Activated CD4-positive, alpha-beta memory T cell treated with anti-CD3 and anti-CD28 coated beads for 36 hours (primary cell): ENCODE measurements at regions of chr11 and their contacts with region 1.

Region 1: GRCh38 chr11:35144136-35144741 is 5.3 kb downstream of the CD44 start:
- DNase-seq: peak; percentile 85
- H3K4me3 Mint-ChIP-seq: peak overlapping the region; percentile 66
- H3K27ac Mint-ChIP-seq: peak overlapping the region; percentile 99
- H3K4me1 Mint-ChIP-seq: peaks cover 69% of the 10 kb centered on the region
- H3K27me3 Mint-ChIP-seq: no peaks in the 10 kb centered on the region

Region 2: DNA sequence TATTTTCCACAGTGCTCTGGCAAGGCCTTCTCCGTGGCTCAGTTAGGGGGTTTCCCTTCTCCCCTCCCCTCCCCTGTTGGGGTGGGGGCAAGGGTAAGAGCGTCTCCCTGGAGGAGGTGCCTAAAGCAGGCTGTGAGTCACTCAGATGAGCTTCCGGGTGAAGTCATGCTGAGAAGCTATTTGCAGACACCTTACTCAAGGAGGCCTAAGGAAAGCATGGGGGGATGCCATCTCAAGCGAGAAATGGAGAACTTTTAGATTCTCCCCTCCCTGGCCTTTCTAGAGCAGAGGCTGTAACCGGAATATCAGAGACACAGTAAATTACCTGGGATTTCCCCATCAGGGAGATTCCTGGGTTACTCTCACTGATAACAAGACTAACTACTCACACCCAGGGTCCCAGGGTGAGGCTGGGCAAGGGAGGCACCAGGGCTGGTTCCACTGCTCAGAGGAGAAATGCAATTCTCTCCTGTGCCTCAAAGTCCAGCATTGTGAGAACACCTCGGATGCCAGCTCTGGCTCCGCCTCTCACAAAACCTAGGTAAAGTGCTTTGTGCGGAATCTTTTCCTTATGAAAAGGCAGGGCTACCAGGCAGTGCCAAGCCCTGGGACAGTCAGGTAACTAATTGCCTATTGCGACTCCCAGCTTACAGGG is 910.0 kb before region 1 on chr11:
- CTCF ChIA-PET with region 1: no interaction called
- POLR2A ChIA-PET with region 1: no interaction called
- intact Hi-C with region 1: loop called (anchors 5 kb)
- DNase-seq: peak; percentile 90
- H3K4me3 Mint-ChIP-seq: no peak overlapping the region
- H3K27ac Mint-ChIP-seq: peak overlapping the region; percentile 77
- H3K4me1 Mint-ChIP-seq: peaks cover 46% of the 10 kb centered on the region
- H3K27me3 Mint-ChIP-seq: peaks cover 6% of the 10 kb centered on the region

Region 3: GRCh38 chr11:34997952-34998528 is 146.2 kb before region 1 on chr11:
- CTCF ChIA-PET with region 1: interaction called, 25 read pairs
- POLR2A ChIA-PET with region 1: interaction called, 4 read pairs
- intact Hi-C with region 1: loop called (anchors 1 kb)
- DNase-seq: no peak
- H3K4me3 Mint-ChIP-seq: peak overlapping the region; percentile 7
- H3K27ac Mint-ChIP-seq: peak overlapping the region; percentile 25
- H3K4me1 Mint-ChIP-seq: peaks cover 19% of the 10 kb centered on the region
- H3K27me3 Mint-ChIP-seq: no peaks in the 10 kb centered on the region

Region 4: DNA sequence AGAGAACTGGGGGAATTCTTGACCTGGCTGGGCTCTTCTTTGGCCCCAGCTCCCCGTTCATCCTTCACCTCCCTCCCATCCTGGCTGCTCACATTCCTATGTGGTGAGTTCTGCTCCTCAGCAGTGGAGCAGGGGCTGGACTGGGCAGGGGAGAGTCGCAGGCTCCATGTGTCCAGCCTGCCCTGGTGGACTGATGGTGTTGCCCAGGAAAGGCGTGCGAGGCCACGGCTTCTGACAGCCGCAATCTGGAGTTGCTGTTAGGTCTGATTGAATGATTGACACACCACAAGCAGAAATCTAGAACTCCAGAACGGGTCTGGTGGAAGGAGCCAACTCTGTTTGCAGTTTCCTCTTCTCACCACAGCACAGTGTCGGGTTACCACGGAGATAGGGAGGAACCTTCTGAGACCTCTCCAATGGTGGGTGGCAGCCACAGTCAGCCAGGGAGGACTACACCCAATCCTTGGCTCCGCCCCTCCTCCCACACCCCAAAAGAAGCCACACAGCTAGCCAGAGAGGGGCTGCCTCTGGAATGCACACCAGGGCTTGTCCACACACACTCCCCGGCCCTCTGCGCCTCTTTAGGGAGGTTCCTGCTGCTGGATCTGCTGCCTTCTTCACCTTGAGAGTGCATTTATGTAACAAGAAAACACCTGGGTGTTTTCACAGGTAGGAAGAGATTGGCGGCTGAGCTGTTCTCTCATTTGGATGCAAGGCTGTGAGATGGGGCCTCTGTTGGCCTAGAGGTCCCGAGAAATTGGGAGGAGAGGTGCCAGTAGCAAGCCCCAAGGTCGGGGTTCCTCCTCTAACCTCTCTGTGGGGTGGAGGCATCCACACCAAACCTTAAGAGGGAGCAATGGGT is 61.7 kb before region 1 on chr11:
- CTCF ChIA-PET with region 1: interaction called, 6 read pairs
- POLR2A ChIA-PET with region 1: interaction called, 5 read pairs
- intact Hi-C with region 1: loop called (anchors 1 kb)
- DNase-seq: peak; percentile 90
- H3K4me3 Mint-ChIP-seq: peak overlapping the region; percentile 62
- H3K27ac Mint-ChIP-seq: peak overlapping the region; percentile 81
- H3K4me1 Mint-ChIP-seq: peaks cover 93% of the 10 kb centered on the region
- H3K27me3 Mint-ChIP-seq: no peaks in the 10 kb centered on the region

Region 5: GRCh38 chr11:35165423-35166368 is 21.5 kb after region 1 on chr11:
- CTCF ChIA-PET with region 1: interaction called, 113 read pairs
- POLR2A ChIA-PET with region 1: interaction called, 65 read pairs
- intact Hi-C with region 1: loop called (anchors 1 kb)
- DNase-seq: peak; percentile 95
- H3K4me3 Mint-ChIP-seq: peak overlapping the region; percentile 71
- H3K27ac Mint-ChIP-seq: peak overlapping the region; percentile 99
- H3K4me1 Mint-ChIP-seq: peaks cover 99% of the 10 kb centered on the region
- H3K27me3 Mint-ChIP-seq: no peaks in the 10 kb centered on the region

Region 6: DNA sequence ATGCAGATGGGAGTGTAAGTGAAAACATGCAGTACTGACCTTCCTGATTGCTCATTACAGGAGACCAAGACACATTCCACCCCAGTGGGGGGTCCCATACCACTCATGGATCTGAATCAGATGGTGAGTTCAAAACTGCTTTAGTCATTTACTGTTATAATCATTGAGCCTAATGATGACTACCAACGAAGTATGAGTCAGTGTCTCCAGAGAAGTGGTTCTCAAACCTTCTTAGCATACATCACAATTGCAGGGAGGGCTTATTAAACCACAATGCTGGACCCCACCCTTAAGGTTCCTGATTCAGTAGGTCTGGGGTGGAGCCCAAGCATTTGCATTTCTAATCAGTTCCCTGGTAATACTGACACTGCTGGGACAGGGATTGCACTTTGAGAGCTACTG is 70.6 kb after region 1 on chr11:
- CTCF ChIA-PET with region 1: interaction called, 4 read pairs
- POLR2A ChIA-PET with region 1: no interaction called
- intact Hi-C with region 1: loop called (anchors 1 kb)
- DNase-seq: peak; percentile 78
- H3K4me3 Mint-ChIP-seq: no peak overlapping the region
- H3K27ac Mint-ChIP-seq: peak overlapping the region; percentile 81
- H3K4me1 Mint-ChIP-seq: peaks cover 74% of the 10 kb centered on the region
- H3K27me3 Mint-ChIP-seq: no peaks in the 10 kb centered on the region

Region 7: GRCh38 chr11:35391922-35392813 is 247.9 kb after region 1 on chr11:
- CTCF ChIA-PET with region 1: no interaction called
- POLR2A ChIA-PET with region 1: no interaction called
- intact Hi-C with region 1: loop called (anchors 2 kb)
- DNase-seq: peak; percentile 89
- H3K4me3 Mint-ChIP-seq: no peak overlapping the region
- H3K27ac Mint-ChIP-seq: no peak overlapping the region
- H3K4me1 Mint-ChIP-seq: peaks cover 29% of the 10 kb centered on the region
- H3K27me3 Mint-ChIP-seq: peaks cover 4% of the 10 kb centered on the region